ENCODE measurements at regions of chr2 and their contacts with region 1.

Region 1: GRCh38 chr2:201795607-201796477 is 10.5 kb upstream of the CDK15 start:
- DNase-seq: no peak
- ATAC-seq: no peak
- H3K4me3 Mint-ChIP-seq: no peak overlapping the region
- H3K27ac Mint-ChIP-seq: no peak overlapping the region
- H3K4me1 Mint-ChIP-seq: no peaks in the 10 kb centered on the region
- H3K27me3 Mint-ChIP-seq: peaks cover 10% of the 10 kb centered on the region
- CTCF ChIP-seq: no peak

Region 2: GRCh38 chr2:201768918-201769317 is 26.9 kb before region 1 on chr2:
- CTCF ChIA-PET with region 1: no interaction called
- POLR2A ChIA-PET with region 1: no interaction called
- intact Hi-C with region 1: loop called (anchors 1 kb)
- DNase-seq: no peak
- ATAC-seq: no peak
- H3K4me3 Mint-ChIP-seq: no peak overlapping the region
- H3K27ac Mint-ChIP-seq: no peak overlapping the region
- H3K4me1 Mint-ChIP-seq: no peaks in the 10 kb centered on the region
- H3K27me3 Mint-ChIP-seq: no peaks in the 10 kb centered on the region
- CTCF ChIP-seq: no peak

Region 3: DNA sequence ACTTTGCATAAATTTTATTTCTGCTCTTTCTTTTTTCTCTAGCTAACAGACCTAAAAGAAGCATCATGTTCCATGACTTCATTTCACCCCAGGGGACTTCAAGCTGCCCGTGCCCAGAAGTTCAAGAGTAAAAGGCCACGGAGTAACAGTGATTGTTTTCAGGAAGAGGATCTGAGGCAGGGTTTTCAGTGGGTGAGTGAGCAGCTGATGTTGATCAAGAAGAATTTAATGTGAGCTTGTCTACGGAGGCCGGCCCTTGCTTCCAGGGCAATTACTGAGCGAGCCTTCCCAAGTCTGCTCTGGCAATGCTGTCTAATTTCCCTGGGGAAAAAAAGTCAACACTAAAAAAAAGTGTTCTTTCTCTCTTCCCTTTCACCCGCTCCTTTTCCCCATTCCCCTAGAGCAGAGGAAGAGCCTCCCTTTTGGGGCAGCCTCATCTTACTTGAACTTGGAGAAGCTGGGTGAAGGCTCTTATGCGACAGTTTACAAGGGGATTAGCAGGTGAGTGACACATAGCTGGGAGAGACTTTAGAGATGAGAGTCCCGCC is 11.7 kb after region 1 on chr2:
- CTCF ChIA-PET with region 1: no interaction called
- POLR2A ChIA-PET with region 1: no interaction called
- intact Hi-C with region 1: no loop called
- DNase-seq: no peak
- ATAC-seq: no peak
- H3K4me3 Mint-ChIP-seq: no peak overlapping the region
- H3K27ac Mint-ChIP-seq: no peak overlapping the region
- H3K4me1 Mint-ChIP-seq: no peaks in the 10 kb centered on the region
- H3K27me3 Mint-ChIP-seq: peaks cover 13% of the 10 kb centered on the region
- CTCF ChIP-seq: no peak